ENCODE measurements at regions of chr15 and their contacts with region 1.

Region 1: DNA sequence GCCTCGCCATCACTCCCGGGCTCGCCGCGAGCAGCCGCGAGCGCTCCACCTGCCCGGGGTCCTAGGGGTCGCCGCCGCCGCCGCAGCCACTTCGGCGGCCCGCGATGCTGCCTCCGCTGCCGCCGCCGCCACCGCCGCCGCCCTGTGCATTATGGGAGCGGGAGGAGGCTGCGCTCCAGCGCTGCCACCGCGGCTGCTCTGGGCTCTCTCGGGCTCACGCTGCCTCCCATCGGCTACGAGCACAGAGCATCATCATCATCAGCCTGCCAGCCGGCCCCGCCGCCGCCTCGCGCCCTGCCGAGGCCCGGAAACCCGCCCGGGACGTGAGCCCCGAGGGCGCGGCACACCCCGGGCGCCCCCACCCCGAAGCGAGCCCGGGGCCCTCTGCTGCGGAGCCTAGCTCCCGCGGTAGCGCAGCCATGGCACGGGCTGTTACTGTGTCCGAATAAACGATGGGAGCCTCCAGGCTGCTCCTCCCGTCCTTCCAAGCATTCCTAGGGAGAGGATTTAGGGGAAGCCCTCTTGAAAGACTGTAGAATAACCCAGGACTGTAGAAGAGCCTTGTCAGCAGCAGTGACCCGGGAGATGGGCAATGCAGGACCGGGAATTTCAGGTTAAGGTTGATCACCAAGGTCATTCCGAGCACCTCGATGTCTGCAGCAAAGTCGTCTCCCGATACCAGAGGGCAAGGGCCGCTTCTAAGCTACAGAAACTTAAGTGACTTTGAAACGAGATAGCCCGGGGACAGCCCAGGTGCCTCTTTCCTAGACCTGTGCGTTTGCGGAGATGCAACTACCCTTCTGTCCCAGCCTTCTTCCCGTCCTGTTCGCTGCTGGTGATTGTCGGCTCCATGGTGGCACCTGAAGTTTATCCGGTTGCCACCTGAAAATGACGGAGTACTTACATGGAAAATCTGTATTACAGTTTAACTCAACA is 579 bp upstream of the MYO5A start:
- DNase-seq: peak; percentile 60 to 74
- ATAC-seq: peak; percentile 78 to 89 (median 86)
- H3K4me3 ChIP-seq: peak overlapping the region; percentile 33 to 92 (median 84)
- H3K27ac ChIP-seq: peak overlapping the region; percentile 44 to 93 (median 82)
- H3K4me1 ChIP-seq: peaks cover 3 to 30% (median 16%) of the 10 kb centered on the region in 9 donors
- H3K27me3 ChIP-seq: peaks cover 0 to 32% (median 5%) of the 10 kb centered on the region in 7 donors
- CTCF ChIP-seq: peak in 2 of 9 donors; percentile 8 to 25

Region 2: GRCh38 chr15:52349052-52349700 is 180.1 kb before region 1 on chr15:
- intact Hi-C with region 1: loop called in 1 of 10 experiments (anchors 10 kb)
- DNase-seq: no peak
- ATAC-seq: peak in 7 of 8 donors; percentile 34 to 78 (median 72)
- H3K4me3 ChIP-seq: no peak overlapping the region
- H3K27ac ChIP-seq: peak overlapping the region in 5 of 10 donors; percentile 1 to 60 (median 51)
- H3K4me1 ChIP-seq: peaks cover 0 to 19% (median 2%) of the 10 kb centered on the region in 9 donors
- H3K27me3 ChIP-seq: no peaks in the 10 kb centered on the region
- CTCF ChIP-seq: peak in 1 of 9 donors; percentile 13

Region 3: GRCh38 chr15:52408823-52409222 is 120.4 kb before region 1 on chr15:
- intact Hi-C with region 1: loop called in 1 of 10 experiments (anchors 10 kb)
- DNase-seq: no peak
- ATAC-seq: no peak
- H3K4me3 ChIP-seq: no peak overlapping the region
- H3K27ac ChIP-seq: no peak overlapping the region
- H3K4me1 ChIP-seq: no peaks in the 10 kb centered on the region
- H3K27me3 ChIP-seq: no peaks in the 10 kb centered on the region
- CTCF ChIP-seq: no peak

Region 4: DNA sequence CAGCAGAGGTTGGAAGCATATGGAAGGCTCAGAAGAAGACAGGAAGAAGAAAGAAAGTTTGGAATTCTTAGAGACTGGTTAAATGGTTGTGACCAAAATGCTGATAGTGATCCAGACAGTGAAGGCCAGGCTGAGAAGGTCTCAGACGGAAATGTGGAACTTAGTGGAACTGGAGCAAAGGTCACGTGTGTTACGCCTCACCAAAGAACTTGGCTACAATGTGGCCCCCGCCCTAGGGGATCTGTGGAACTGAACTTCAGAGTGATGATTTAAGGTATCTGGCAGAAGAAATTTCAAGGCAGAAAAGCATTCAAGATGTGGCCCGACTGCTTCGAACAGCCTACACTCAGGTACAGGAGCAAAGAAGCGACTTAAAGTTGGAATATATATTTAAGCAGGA is 83.7 kb before region 1 on chr15:
- intact Hi-C with region 1: no loop called
- DNase-seq: no peak
- ATAC-seq: peak in 5 of 8 donors; percentile 24 to 73 (median 45)
- H3K4me3 ChIP-seq: no peak overlapping the region
- H3K27ac ChIP-seq: peak overlapping the region in 2 of 10 donors; percentile 7 to 36
- H3K4me1 ChIP-seq: peaks cover 0 to 58% (median 16%) of the 10 kb centered on the region in 9 donors
- H3K27me3 ChIP-seq: no peaks in the 10 kb centered on the region
- CTCF ChIP-seq: no peak

Region 5: DNA sequence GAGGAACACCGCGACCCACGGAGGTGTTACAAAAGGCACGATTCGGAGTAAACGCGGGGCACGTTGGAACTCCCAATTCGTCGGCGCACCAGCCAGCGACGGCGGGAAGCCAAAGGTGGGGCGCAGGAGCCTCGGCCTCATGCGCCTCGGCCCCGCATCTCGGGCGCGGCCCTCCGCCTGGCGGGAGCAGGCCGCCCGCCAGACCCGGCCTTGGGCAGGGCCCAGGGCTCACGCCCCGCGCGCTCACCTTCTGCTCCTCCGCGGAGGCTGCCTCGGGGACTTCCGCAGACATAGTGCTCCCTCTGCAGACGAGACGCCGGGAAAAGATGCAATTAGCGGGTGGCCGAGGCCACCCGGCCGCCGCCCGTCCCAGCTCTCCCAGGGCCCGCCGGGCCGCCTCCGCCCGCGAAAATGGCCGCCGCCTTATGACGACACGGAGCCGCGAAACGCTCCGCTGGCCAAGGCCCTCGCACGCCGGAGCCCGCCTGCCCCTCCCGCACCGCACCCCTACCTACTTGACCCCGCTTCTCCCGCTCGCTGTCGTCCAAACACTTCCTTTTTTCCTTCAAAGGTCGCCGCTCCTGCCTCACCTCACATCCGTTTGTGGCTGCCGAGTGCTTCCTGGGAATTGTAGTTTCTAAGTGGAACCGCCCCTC is 39.5 kb after region 1 on chr15 and contains the start of gene ARPP19:
- intact Hi-C with region 1: loop called in 1 of 10 experiments (anchors 2 kb)
- DNase-seq: peak; percentile 86 to 90
- ATAC-seq: peak; percentile 89 to 94 (median 92)
- H3K4me3 ChIP-seq: peak within 1 kb of the TSS; percentile 45 to 92 (median 75)
- H3K27ac ChIP-seq: peak within 1 kb of the TSS; percentile 69 to 96 (median 93)
- H3K4me1 ChIP-seq: peaks cover 3 to 46% (median 41%) of the 10 kb centered on the region in 9 donors
- H3K27me3 ChIP-seq: no peaks in the 10 kb centered on the region
- CTCF ChIP-seq: peak in 5 of 9 donors; percentile 23 to 45 (median 40)
- total RNA-seq, gene ARPP19: 121 to 166 (median 147) TPM

Region 6: DNA sequence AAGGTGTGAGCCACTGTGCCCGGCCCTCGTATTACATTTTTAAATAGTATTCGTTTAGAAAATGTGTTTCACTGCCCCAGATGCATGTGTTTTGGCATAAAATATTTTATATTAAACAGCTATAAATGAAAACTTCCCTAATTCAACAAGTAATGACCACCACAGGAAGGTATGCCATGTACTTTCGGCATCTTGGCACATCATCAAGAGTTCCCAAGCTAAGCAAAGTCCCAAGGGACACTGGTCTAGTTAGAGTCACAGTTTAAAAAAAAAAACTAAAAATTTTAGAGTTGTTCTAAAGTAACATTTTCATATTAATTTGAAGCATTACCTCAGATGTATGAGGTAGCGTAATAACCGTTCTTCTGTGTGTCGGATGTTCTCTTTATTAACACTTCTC is 55.2 kb after region 1 on chr15:
- intact Hi-C with region 1: loop called in 1 of 10 experiments (anchors 10 kb)
- DNase-seq: no peak
- ATAC-seq: no peak
- H3K4me3 ChIP-seq: no peak overlapping the region
- H3K27ac ChIP-seq: no peak overlapping the region
- H3K4me1 ChIP-seq: peaks cover 0 to 9% (median 0%) of the 10 kb centered on the region in 9 donors
- H3K27me3 ChIP-seq: no peaks in the 10 kb centered on the region
- CTCF ChIP-seq: no peak